ENCODE measurements at regions of chr17 and their contacts with region 1.

Region 1: DNA sequence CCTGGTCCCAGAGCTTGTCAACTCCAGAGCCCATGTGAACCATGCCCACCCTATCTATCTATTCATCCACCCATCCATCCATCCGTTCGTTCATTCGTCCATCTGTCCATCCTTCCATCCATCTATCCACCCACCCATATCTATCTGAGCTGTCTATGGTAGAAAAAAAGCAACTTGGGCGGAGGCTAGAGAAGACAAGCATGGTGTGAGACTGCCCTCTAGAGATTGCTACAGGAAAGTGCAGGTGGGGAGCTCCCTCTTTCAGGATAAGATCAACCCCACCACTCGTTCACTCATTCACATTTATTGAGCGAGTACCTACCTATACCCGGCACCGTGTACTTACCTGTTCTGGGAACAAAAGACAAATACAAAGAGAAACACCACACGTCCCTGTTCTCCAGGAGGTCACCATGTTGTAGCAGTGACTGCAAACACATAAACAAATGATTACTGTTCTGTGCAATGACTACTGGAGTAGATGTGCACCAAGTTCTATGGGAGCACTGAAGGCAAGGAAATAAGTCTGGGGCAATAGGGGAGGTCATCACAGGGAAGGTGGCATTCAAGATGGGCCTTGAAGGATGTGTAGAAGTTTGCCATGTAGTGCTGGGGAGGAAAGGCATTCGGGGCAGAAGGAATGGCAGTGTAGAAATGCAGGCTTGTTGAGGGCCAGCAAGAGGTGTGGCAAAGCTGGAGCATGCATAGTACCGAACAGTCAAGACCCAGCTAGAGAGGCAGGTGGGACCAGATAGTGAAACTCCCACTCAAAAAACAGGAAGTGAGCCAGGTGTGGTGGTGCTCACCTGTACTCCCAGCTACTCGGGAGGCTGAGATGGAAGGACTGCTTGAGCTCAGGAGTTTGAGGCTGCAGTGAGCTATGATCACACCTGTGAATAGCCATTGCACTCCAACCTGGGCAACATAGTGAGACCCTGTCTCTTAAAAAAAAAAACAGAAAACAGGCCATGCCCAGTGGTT is 13.4 kb upstream of the ATP5MC1 start:
- DNase-seq: peak; percentile 83
- CTCF ChIP-seq: peak; percentile 90

Region 2: GRCh38 chr17:47970704-47971463 is 908.3 kb before region 1 on chr17 and contains the start of gene CDK5RAP3:
- CTCF ChIA-PET with region 1: no interaction called
- POLR2A ChIA-PET with region 1: no interaction called
- DNase-seq: peak; percentile 99
- CTCF ChIP-seq: peak; percentile 86

Region 3: DNA sequence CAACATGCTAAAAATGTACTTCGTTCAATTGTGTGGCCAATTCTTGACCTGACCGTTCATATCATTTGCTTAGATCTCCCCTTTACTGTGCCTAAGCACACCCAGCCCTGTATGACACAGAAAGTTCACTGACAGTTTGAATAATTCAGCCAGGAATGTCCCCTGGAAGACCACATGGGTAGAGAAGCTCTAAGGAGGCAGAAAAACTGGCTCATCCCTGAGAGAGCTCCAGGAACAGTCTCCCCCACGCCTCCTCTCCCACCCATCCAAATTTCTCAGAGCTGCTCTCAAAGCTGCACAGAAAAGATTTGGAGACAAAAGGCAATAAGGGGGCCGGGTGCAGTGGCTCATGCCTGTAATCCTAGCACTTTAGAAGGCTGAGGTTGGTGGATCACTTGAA is 168.1 kb before region 1 on chr17:
- CTCF ChIA-PET with region 1: interaction called, 166 read pairs
- POLR2A ChIA-PET with region 1: no interaction called
- DNase-seq: no peak
- CTCF ChIP-seq: no peak

Region 4: DNA sequence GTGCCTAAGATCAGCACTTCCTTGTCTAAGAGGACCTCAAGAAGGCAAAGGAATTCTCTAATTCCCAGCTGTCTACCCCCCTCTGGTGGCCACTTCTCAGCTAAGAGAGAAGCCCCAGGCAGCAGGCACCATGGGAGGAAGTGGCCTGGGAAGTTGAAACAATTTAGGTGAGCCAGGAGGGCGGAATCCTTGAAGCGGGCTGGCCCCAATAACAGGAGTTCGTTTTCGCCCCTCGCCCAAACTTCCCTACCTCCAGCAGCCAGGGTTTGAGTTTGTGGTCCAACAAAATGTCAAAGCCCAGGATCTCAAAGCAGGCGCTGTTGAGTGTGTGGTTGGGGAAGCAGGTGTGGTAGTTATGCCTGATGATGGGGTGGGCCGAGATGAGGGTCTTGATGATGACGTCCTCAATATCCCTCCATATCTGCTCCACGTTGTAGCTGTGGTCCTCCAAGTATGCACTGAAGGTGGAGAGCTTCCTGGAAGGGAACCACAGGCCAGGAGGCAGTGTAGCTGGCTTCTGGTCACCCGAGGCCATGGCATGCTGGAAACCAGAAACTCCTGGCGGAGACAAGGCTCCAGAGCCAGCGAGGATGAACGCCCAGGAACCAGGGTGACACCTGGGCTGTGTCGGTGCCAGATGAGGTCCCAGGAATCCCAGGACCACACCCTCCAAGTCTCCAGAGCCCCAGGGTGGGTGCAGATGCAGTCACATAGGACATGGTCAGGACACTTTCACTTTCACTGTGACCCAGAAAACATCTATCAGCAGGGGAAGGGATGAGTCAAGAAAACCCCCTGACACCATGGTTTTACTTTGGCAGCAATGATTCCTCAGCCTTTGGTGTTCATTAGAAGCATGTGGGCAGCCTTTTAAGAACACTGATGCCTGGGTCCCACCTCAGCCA is 87.8 kb before region 1 on chr17:
- CTCF ChIA-PET with region 1: interaction called, 25 read pairs
- POLR2A ChIA-PET with region 1: no interaction called
- DNase-seq: peak; percentile 70
- CTCF ChIP-seq: peak; percentile 62

Region 5: GRCh38 chr17:48836004-48836403 is 43.2 kb before region 1 on chr17:
- CTCF ChIA-PET with region 1: interaction called, 29 read pairs
- POLR2A ChIA-PET with region 1: interaction called, 5 read pairs
- DNase-seq: no peak
- CTCF ChIP-seq: no peak

Region 6: GRCh38 chr17:48860034-48860433 is 19.2 kb before region 1 on chr17:
- CTCF ChIA-PET with region 1: interaction called, 109 read pairs
- POLR2A ChIA-PET with region 1: no interaction called
- DNase-seq: no peak
- CTCF ChIP-seq: no peak

Region 7: DNA sequence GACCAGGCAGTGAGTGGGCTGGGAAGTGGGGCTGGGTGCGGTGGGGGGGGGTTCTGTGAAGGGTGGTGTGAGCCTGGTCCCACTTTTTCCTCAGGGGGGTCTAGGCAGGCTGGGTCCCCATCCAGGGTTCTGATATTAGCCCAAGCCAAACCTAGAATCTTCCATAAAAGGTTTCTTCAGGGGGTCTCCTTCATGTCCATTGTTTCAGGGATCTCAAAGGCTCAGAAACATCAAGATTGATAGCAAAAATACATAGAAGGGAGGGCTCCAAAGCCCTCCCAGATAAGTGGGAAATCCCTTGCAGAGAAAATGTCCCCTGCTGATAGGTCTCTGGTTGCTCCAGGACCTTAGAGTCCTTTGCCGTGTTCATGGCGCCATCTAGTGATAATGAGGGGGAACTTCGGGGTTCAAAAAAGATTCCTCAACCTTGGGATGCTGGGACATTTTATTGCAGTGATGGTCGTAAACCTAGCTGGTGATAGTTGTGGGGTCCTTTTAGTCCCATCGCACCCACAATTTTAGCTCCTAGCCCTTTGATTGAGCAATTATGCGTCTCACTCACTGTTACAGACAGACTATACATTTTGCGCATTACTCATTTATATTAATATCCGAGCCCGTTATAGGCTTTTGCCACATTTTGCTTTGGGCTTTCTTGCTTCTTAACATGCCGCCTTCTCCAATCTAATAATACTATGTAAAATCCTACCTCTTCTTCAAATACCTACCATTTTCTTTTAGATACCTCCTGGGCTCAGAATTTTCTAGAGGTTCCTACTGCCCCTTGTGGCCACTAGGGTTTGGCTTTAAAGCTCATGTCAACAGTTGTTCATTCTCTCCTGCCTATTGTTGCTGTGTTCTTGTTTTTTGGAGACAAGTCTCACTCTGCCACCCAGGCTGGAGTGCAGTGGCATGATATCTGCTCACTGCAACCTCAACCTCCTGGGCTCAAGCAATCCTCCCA is 153.0 kb after region 1 on chr17:
- CTCF ChIA-PET with region 1: interaction called, 46 read pairs
- POLR2A ChIA-PET with region 1: no interaction called
- DNase-seq: peak; percentile 84
- CTCF ChIP-seq: peak; percentile 71

Region 8: DNA sequence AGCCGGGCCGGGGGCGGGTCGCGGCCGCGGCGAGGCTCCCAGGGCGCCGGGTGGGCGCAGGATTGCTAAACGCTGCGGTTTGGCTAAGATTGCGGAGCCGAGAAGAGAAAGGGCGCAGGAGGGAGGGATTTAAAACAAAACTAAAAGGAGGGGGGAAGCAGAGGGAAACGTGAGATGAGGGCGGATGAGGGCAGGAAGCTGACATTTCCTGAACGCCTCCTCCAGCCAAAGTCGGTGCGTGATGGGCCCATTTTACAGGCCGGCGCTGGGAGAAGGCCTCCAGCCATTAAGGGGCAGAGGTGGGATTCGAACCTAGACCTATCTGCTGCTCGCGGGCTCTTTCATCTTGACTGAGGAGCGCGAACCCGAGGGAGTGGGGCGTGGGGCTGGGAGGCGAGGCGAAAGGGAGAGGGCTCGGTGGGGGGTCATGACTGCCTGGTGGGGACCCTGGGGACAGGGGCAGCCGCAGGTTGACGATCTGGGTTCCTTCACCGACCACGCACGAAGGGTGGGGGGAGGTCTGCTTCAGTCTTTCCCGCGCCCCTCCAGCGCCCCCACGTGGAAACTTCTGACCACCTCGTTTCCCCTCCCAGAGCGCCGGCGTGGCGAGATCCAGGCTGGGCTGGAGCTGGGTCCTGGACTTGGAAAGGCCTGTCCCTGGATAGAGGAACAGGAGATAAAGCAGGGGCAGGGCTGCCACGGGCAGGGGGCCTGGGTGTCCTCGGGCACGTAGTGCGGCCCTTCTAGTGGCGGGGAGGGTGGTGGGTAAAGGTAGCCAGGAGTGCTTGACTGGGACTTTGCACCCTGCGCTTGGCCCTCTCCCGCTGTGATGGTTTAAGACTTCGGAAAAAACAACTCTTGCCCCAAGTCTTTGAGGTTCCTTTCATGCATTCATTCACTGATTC is 972.4 kb after region 1 on chr17:
- CTCF ChIA-PET with region 1: no interaction called
- POLR2A ChIA-PET with region 1: no interaction called
- DNase-seq: peak; percentile 69
- CTCF ChIP-seq: peak; percentile 61

Measured in GM10248 (cell line).